Posterior cingulate gyrus (tissue), 11 donors: ENCODE measurements at regions of chr3 and their contacts with region 1.

Region 1: GRCh38 chr3:155701882-155702465 is 42.9 kb downstream of the PLCH1 start:
- DNase-seq: no peak

Region 2: DNA sequence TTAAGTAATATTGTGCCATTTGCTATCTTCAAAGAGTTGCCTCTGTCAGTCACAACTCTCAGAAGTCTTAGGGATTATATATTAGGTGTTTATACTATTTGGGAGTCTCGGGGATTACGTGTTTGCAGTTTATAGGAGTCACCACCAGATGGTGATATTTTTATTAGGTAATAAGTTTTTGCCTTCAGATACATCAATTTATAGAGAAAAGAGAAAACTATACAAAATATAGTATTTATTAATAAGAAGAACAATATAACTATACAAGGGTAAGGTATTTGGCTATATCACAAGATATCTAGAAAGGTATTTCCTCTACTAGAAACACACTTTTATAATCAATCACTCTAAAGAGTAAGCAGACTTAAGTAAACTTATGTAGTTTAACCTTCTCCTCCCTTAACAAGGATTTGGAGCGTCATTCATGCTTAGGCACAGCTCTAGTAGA is 1367.0 kb before region 1 on chr3:
- intact Hi-C with region 1: loop called (anchors 10 kb)
- DNase-seq: no peak

Region 3: DNA sequence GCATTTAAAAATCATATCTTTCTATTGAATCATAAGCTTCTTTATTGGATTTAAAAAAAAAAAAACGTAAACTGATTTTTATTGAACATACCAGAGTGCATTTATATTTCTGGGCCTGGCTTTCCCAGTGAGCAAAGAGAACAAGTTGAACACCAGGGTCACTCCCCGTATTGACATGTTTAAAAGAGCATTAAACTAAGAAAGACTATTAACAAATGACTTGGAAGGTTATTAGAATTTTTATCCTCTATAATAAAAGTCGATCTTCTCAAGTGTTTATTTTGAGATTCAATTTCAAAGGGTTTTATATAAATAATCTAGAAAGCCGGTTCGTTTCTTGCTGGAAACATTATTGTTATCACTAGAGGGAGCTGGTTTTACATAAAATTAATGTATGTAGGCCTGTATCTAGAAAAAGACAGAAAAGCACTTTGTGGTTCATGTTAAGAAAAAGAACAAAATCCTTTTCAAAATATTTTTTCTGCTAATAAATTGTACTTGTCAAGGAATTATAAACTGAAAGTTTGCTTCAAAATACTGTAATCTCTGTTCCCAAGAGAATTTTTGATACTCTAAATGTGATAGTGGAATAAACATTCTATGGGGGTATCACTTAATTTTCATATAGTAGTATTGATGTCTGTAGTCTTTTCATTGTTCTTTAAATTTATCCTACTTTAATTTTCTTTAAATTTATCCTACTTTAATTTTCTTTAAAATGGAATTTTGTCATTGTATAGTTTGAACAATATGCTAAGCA is 943.7 kb before region 1 on chr3:
- intact Hi-C with region 1: loop called (anchors 5 kb)
- DNase-seq: no peak

Region 4: GRCh38 chr3:155352900-155353490 is 349.0 kb before region 1 on chr3:
- intact Hi-C with region 1: loop called (anchors 1 kb)
- DNase-seq: no peak

Region 5: GRCh38 chr3:155382396-155383042 is 319.5 kb before region 1 on chr3:
- intact Hi-C with region 1: loop called (anchors 10 kb)
- DNase-seq: peak in 7 of 10 donors; percentile 36 to 90 (median 53)

Region 6: DNA sequence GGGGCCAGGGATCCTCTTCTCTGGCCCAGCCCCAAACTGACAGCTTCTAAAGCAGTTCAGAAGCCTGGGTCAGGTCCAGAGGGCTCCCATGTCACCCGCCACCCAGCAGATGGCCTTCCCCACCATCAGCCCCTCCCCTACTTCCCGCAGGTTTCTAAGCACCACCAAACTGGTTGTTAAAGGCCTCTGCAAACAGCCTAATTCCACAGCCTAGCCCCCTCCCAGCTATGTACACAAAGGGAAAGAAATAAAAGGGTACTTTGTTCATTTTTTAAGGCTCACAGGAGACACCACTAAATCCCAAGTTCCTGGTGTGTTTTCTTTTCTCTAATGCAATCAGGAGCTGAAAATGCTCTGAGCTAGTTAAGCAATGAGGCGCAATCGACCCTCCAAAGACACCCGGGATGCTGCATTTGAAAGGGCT is 12.3 kb after region 1 on chr3:
- intact Hi-C with region 1: no loop called
- DNase-seq: no peak